Posterior cingulate gyrus (tissue), 11 donors: ENCODE measurements at regions of chr5 and their contacts with region 1.

Region 1: DNA sequence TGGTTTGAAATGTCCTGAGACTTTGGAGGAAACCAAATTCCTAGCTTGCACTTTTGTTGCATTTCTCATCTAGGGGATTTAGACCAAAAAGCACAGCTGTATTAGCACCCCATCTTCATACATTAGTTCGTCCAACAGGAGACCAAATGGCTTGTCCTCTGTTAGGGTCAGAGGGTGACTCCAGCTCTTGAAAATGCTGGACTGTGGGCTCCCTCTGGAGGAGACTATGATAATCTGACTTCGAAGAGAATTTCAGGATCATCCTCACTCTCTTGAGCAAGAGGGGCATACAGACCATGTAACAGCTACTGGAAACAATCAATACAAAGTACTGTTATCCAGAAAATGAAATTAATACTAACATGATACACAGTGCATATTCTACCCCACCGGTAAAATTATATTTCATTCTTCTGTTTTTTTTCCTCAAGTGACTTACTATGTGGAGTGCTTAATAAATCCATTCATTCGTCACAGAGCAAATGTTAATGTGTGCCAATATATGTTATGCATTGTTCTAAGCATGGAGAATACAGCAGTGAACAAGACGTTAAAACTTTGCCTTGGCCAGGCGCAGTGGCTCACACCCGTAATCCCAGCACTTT is 63.7 kb upstream of the PPP2CA start:
- DNase-seq: peak in 7 of 10 donors; percentile 12 to 83 (median 33)

Region 2: DNA sequence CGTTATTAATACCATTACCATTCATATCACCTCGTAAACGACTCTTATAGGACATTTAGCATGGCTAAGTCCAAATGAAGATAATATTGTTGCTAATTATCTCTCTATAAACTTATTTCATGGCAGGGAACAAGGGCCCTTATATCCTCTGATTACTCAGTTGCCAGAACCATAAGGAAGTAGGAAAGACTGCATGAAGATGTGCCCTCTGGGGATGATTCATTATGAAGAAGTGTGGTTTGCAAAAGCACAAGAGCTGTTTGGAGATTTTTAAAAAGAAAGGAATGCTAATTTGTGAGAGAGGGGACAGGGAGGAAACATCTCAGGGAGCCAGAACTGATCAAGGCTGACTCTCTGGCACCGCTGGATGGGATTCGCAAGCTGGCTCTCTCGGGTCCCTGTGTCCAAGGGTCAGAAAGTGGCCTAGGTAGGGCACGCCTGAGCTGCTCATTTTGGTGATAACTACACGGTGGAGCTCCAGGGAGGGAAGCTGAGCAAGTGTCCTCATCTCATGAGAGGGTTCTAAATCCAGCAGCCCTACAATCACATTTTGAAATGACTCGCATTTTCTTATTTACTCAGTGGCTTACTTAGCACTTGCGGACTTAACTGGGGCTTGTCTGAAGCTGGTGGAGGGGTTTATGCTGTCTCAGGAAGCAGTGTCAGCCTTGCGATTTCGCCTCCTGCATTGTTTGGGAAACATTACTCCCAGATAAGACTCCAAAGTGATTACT is 458.0 kb before region 1 on chr5:
- intact Hi-C with region 1: no loop called
- DNase-seq: peak in 1 of 10 donors; percentile 38

Region 3: GRCh38 chr5:134041570-134042411 is 247.8 kb before region 1 on chr5:
- intact Hi-C with region 1: loop called (anchors 5 kb)
- DNase-seq: peak in 2 of 10 donors; percentile 48 to 74

Region 4: GRCh38 chr5:134184155-134185135 is 105.2 kb before region 1 on chr5:
- intact Hi-C with region 1: loop called (anchors 1 kb)
- DNase-seq: peak in 9 of 10 donors; percentile 32 to 95 (median 73)

Region 5: DNA sequence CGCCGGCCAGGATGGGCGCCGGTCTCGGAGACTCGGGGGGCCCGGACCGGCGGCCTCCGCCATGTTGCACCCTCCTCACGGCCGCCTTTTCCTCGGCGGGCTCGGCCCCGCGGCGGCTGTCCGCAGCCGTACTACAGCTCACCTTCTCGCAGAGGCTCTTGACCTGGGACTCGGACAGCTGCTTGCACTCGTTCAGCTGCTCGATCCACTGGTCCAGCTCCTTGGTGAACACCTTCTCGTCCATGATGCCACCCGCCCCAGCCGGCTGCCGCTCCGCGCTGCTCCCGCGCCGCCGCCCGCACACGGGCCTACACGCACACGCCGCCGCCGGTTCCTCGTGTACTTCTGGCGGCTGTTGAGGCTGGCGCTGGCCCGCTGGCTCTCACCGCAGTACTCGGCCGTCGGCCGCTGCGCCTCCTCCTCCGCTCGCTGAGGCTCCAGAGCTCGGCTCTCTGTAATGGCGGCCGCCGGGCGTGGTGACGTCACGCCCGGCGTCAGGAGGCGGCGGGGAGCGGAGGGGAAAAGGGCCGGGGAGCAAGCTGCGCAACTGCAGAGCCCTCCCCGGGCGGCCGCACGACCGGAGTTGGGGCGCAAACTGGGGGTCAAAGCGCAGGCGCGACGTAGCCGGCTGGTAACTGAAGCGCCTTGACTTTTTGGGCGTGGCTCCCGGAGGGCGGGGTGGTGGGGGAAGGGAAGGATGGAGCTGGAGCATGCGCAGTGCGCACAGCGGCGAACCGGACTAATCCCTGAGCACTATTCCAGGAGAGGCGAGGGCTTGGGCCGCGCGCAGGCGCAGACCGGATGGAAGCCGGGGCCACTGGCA is 63.8 kb before region 1 on chr5 and contains the start of gene PPP2CA:
- intact Hi-C with region 1: loop called (anchors 10 kb)
- DNase-seq: peak; percentile 97 to 100 (median 99)

Region 6: DNA sequence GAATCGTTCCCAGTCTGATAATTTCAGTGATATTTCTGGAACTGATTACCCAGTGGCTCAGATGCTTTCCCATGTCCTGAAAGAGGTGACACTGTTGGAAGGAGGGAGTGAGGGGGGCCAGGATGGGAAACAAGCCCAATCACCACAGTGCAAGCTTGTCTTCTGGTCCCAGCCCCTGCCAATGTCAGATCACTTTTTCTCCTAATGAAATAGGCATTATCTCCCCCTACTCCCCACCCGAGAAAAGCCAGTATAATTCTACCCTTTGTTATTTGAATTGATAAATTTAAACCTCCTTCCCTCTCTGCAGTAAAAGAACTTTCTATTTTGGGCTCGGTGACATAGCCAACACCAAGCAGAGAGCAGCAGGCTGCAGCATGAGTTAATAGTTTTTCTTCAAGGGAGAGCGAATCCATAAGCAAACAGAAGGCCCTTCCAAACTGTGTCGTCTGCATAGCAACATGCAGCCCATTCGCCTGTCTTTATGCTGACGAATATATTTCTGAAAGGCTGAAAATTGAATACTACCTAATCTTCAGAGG is 49.1 kb before region 1 on chr5:
- intact Hi-C with region 1: loop called (anchors 5 kb)
- DNase-seq: peak in 6 of 10 donors; percentile 30 to 92 (median 36)